HAP-1 (cell line): ENCODE measurements at regions of chr19 and their contacts with region 1.

Region 1: GRCh38 chr19:47296036-47296435 is 13.6 kb upstream of the C5AR1 start:
- DNase-seq: peak; percentile 79 to 93
- H3K4me3 ChIP-seq: no peak overlapping the region
- H3K4me1 ChIP-seq: no peaks in the 10 kb centered on the region
- H3K27me3 ChIP-seq: no peaks in the 10 kb centered on the region

Region 2: DNA sequence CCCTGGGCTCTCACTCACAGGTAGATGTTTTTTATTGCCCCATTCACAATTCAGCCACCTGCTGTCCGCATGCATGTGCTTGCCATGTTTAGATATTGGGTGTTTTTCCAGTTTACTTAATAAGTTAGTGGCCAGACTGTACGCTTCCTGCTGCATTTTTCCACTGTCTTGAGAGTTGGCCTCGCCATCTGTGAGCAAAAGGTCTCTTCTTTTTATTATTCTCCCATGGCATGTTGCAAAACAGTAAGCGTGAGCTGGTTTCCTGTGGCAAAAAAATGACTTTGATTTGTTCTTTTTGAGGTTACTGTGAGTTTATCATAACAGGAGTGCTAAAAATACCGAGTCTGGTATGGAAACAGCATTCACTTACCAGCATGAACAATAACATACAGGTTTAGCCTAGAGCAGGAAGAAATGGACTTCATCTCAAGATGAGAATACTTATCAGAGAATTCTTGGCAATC is 119.4 kb before region 1 on chr19:
- in situ Hi-C with region 1: no loop called
- DNase-seq: no peak
- H3K4me3 ChIP-seq: no peak overlapping the region
- H3K4me1 ChIP-seq: no peaks in the 10 kb centered on the region
- H3K27me3 ChIP-seq: no peaks in the 10 kb centered on the region

Region 3: DNA sequence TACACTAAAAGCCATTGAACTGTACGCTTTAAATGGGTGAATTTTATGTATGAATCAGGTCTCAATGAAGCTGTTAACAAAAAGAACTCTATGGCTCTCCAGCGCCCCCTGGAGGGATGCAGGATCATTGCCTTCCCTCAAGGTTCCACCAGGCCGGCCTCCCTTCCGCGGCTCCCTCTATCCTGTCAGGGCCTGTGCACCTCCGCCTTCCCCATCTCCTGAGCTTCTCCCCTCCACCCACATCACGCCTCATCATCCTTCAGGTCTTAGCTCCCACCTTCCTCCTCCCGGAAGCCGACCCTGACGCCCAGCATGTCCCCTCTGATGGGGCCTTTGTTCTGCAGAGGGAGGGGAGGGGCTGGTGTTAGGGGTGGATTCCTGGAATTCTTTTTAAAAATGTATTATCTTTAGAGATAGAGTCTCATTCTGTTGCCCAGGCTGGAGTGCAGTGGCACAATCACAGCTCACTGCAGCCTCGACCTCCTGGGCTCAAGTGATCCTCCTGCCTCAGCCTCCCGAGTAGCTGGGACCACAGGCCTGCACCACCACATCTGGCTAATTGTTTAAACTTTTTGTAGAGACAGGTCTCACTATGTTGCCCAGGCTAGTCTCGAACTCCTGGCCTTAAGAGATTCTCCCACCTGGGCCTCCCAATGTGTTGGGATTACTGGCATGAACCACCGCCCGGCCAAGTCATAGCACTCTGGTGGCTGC is 95.6 kb after region 1 on chr19:
- in situ Hi-C with region 1: loop called (anchors 10 kb)
- DNase-seq: peak; percentile 63 to 91
- H3K4me3 ChIP-seq: no peak overlapping the region
- H3K4me1 ChIP-seq: no peaks in the 10 kb centered on the region
- H3K27me3 ChIP-seq: no peaks in the 10 kb centered on the region